Mammary epithelial cell (primary cell): ENCODE measurements at regions of chr16 and their contacts with region 1.

Region 1: GRCh38 chr16:87765776-87766484 is at the start of gene KLHDC4:
- DNase-seq: peak; percentile 82
- H3K4me3 ChIP-seq: peak within 1 kb of the TSS; percentile 94 to 96 (median 95)
- H3K27ac ChIP-seq: peak within 1 kb of the TSS; percentile 88
- H3K4me1 ChIP-seq: peaks cover 10% of the 10 kb centered on the region
- H3K27me3 ChIP-seq: no peaks in the 10 kb centered on the region
- CTCF ChIP-seq: no peak
- total RNA-seq, gene KLHDC4: 21.7 to 39.0 TPM

Region 2: DNA sequence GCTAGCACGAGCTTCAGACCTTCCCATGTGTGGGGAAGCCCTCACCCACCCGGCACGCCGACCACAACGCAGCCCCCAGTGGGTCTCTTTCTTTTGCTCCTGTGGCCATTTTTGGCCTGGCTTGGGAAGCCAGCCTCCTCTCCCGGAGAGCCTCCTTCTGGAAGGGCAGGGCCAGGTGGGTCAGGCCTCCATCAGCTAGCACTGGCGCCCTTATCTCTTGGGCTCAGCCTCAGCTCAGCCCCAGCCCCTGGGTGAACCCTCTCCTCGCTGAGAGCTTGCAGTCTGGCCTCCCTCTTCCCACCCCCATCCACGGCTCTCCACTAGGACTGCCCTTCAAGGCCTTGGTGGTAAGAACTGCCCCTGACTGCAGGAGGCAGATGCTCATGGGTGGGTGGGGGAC is 178.3 kb before region 1 on chr16:
- CTCF ChIA-PET with region 1: interaction called, 3 read pairs
- dilution Hi-C with region 1: no loop called
- in situ Hi-C with region 1: no loop called
- intact Hi-C with region 1: loop called (anchors 1 kb)
- DNase-seq: no peak
- H3K4me3 ChIP-seq: no peak overlapping the region
- H3K27ac ChIP-seq: no peak overlapping the region
- H3K4me1 ChIP-seq: peaks cover 2% of the 10 kb centered on the region
- H3K27me3 ChIP-seq: peaks cover 9% of the 10 kb centered on the region
- CTCF ChIP-seq: no peak

Region 3: GRCh38 chr16:87664792-87665191 is 101.1 kb before region 1 on chr16:
- CTCF ChIA-PET with region 1: no interaction called
- dilution Hi-C with region 1: loop called (anchors 5 kb)
- in situ Hi-C with region 1: no loop called
- intact Hi-C with region 1: no loop called
- DNase-seq: no peak
- H3K4me3 ChIP-seq: no peak overlapping the region
- H3K27ac ChIP-seq: no peak overlapping the region
- H3K4me1 ChIP-seq: no peaks in the 10 kb centered on the region
- H3K27me3 ChIP-seq: no peaks in the 10 kb centered on the region
- CTCF ChIP-seq: no peak

Region 4: DNA sequence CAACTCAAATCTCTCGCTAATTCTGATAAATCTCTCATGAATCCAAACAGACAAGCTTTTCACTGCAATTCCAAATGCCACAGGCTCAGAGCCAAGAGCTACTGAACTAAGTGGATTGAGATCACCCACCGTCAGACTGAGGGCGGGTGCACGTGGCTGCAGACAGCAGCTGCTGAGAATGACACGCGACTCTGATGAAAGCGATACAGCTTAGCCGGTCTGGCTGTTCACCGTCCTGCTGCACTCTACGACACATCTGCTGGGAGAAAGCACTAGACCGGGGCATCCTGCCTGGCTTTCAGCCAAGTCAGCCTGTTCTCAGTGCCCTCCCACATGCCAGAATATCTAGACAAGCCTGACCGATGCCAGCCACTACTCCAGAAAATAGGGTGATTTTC is 42.7 kb before region 1 on chr16:
- CTCF ChIA-PET with region 1: no interaction called
- dilution Hi-C with region 1: loop called (anchors 5 kb)
- in situ Hi-C with region 1: no loop called
- intact Hi-C with region 1: no loop called
- DNase-seq: peak; percentile 57
- H3K4me3 ChIP-seq: no peak overlapping the region
- H3K27ac ChIP-seq: no peak overlapping the region
- H3K4me1 ChIP-seq: no peaks in the 10 kb centered on the region
- H3K27me3 ChIP-seq: no peaks in the 10 kb centered on the region
- CTCF ChIP-seq: no peak

Region 5: DNA sequence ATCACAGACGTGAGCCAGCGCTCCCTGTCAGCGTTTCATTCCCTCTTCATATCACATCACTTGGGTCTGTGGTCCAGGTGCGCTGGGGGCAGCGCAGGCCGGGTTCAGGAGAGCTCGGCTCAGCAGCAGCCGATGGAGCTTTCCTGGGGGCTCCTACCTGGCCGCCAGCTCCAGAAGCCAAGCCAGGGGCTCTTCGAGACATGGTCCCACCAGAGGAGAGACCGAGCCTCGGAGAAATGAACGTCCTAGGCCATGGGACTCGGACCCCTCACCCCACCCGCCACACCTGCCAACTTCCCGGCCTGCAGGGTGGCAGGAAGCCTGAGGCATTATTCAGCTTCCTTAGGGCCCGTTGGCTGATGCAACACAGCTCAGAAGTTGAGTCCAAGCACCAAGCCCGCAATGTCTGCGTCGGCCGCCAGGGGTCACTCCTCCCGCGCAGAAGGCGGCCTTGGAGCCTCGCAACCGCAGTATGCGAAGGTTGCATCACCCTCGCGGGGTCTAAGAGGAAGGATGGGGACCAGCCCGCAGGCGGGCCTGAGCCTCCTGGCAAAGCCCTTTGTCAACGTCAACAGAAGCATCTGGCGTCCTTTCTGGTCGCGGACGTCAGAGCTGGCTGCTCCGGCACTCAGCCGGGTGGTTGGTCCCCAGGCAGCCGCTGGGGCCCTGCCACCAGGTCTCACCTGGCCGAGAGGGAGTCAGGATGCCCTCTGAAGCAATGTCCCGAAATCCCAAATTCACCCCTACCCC is 13.1 kb after region 1 on chr16:
- CTCF ChIA-PET with region 1: no interaction called
- dilution Hi-C with region 1: no loop called
- in situ Hi-C with region 1: no loop called
- intact Hi-C with region 1: no loop called
- DNase-seq: peak; percentile 83
- H3K4me3 ChIP-seq: no peak overlapping the region
- H3K27ac ChIP-seq: peak overlapping the region; percentile 76
- H3K4me1 ChIP-seq: peaks cover 43% of the 10 kb centered on the region
- H3K27me3 ChIP-seq: no peaks in the 10 kb centered on the region
- CTCF ChIP-seq: peak; percentile 86 to 94

Region 6: DNA sequence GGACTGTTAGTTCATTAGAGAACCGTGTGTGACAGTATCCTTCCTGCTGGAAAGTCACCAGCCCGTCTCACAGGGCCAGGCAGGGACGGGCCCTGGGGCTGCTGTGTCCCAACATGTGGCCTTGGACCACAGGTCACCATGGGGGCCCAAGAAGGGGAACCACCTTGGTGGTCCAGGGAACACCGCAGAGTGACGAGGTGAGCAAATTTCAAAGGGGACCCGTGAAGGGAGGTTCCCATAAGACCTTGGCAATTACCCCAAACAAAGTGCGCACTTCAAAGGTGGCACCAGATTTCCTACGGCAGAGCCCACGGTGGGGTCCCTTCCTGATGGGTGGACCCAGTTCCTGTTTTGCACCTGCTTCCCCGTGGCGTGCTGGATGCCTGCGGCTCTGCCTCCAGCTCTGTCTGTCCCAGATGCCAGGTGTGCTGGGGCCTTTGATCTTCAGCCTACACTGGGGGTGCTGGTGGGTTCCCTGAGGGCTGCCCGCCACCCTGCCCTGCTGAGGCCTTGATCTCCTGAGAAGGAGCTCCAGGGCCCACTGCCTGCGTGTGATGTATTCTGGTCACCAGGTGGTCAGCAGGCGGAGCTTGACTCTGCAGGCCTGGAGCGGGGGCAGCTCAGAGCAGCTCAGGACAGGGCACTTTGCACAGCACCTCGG is 76.4 kb after region 1 on chr16:
- CTCF ChIA-PET with region 1: no interaction called
- dilution Hi-C with region 1: no loop called
- in situ Hi-C with region 1: no loop called
- intact Hi-C with region 1: no loop called
- DNase-seq: no peak
- H3K4me3 ChIP-seq: no peak overlapping the region
- H3K27ac ChIP-seq: no peak overlapping the region
- H3K4me1 ChIP-seq: peaks cover 16% of the 10 kb centered on the region
- H3K27me3 ChIP-seq: no peaks in the 10 kb centered on the region
- CTCF ChIP-seq: no peak